ENCODE measurements at regions of chr1 and their contacts with region 1.

Region 1: GRCh38 chr1:108600504-108600903 is 40.6 kb downstream of the EEIG2 start:
- DNase-seq: no peak
- ATAC-seq: no peak
- H3K4me3 ChIP-seq: peak overlapping the region; percentile 2 to 26 (median 22)
- H3K27ac ChIP-seq: no peak overlapping the region
- H3K4me1 ChIP-seq: peaks cover 8 to 10% of the 10 kb centered on the region in 2 donors
- H3K27me3 ChIP-seq: no peaks in the 10 kb centered on the region
- CTCF ChIP-seq: no peak
- POLR2A ChIP-seq: no peak

Region 2: DNA sequence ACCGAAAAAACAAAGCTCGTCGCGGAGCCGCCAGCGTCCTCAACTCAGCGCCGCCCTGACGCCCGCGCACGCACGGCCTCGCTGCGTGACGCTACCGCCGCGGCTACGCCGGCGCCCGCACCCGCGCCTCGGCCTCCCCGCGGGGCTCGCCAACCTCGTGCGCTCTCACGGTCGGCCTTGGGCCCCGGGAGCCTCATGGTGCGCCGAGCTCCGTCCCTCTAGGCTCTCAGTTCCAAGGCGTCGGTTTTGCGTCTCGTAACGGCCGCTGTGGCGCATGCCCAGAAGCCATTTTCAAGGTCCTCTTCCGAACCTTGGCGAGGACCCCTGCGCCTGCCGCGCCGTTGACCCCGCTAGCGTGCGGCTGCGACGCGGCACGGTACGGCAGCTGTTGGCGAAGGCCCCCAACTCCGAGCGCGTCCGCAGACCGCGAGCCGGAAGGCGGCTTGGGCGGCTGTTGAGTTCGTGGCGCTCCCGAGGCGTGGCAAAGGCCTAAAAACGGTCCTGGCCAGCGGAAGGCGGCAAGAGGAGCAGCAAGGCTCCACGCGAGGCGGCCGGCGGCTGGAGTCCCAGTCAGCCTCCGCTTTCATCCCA is 60.6 kb after region 1 on chr1 and contains the start of gene HENMT1:
- in situ Hi-C with region 1: no loop called
- intact Hi-C with region 1: no loop called
- DNase-seq: peak; percentile 6 to 37
- ATAC-seq: peak; percentile 73 to 83
- H3K4me3 ChIP-seq: peak within 1 kb of the TSS; percentile 71 to 90 (median 76)
- H3K27ac ChIP-seq: peak within 1 kb of the TSS; percentile 76 to 90 (median 77)
- H3K4me1 ChIP-seq: peaks cover 4 to 5% of the 10 kb centered on the region in 2 donors
- H3K27me3 ChIP-seq: no peaks in the 10 kb centered on the region
- CTCF ChIP-seq: no peak
- POLR2A ChIP-seq: peak in 1 of 2 donors; percentile 8
- total RNA-seq, gene HENMT1: 0.51 to 3.5 (median 1.8) TPM

Region 3: GRCh38 chr1:109034382-109034781 is 433.9 kb after region 1 on chr1:
- in situ Hi-C with region 1: no loop called
- intact Hi-C with region 1: loop called (anchors 5 kb)
- DNase-seq: no peak
- ATAC-seq: no peak
- H3K4me3 ChIP-seq: no peak overlapping the region
- H3K27ac ChIP-seq: no peak overlapping the region
- H3K4me1 ChIP-seq: peaks cover 0 to 3% of the 10 kb centered on the region in 2 donors
- H3K27me3 ChIP-seq: no peaks in the 10 kb centered on the region
- CTCF ChIP-seq: no peak
- POLR2A ChIP-seq: no peak

Region 4: GRCh38 chr1:110068646-110069403 is 1468.3 kb after region 1 on chr1:
- in situ Hi-C with region 1: no loop called
- intact Hi-C with region 1: no loop called
- DNase-seq: no peak
- ATAC-seq: no peak
- H3K4me3 ChIP-seq: peak overlapping the region in 1 of 4 donors; percentile 45
- H3K27ac ChIP-seq: no peak overlapping the region
- H3K4me1 ChIP-seq: peaks cover 0 to 4% of the 10 kb centered on the region in 2 donors
- H3K27me3 ChIP-seq: peaks cover 58 to 61% (median 60%) of the 10 kb centered on the region in 3 donors
- CTCF ChIP-seq: no peak
- POLR2A ChIP-seq: no peak